ENCODE measurements at regions of chr1 and their contacts with region 1.

Region 1: DNA sequence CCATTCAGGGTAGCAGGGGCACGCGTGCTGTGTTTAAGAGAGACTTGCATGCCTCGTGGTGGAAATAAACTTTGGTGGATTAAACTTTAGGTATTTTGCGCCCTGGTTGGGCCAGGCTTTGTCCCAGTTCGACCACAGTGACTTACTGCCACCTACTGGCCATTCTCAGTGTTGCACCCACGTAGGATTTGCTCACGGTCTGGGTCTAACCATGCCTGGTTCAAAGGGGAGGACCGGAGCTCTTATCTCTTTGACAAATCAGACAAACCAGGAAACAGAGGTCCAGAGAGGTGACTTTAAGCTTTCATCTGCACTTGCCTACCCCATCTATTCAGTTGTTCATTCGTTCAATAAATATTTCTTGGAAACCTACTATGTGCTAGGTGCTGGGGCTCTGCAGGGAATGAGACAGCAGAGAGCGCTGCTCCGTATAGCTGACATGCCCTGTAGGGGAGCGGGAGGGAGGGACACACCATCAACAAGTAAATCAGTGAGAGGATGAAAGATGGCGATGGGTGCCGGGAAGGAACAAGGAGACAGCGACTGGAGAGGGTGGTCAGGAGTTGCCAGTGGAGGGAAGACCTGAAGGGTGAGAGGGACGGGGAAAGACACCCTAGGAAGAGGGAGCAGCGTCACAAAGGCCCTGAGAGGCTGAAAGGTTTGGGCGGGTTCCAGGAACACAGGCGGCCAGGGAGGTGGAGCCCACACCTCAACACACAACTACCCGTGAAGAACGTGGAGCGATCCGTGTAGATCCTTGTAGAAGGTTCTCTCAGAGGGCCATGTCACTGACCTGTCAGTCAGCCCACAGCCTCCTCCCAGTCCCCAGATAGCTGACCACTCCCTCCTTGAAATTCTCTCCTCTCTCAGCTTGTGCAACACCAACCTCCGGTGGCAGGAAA is 27.2 kb upstream of the TINAGL1 start:
- DNase-seq: peak; percentile 74 to 99 (median 95)
- ATAC-seq: peak; percentile 94
- H3K4me3 ChIP-seq: no peak overlapping the region
- H3K4me1 ChIP-seq: peaks cover 6% of the 10 kb centered on the region
- CTCF ChIP-seq: peak; percentile 90

Region 2: DNA sequence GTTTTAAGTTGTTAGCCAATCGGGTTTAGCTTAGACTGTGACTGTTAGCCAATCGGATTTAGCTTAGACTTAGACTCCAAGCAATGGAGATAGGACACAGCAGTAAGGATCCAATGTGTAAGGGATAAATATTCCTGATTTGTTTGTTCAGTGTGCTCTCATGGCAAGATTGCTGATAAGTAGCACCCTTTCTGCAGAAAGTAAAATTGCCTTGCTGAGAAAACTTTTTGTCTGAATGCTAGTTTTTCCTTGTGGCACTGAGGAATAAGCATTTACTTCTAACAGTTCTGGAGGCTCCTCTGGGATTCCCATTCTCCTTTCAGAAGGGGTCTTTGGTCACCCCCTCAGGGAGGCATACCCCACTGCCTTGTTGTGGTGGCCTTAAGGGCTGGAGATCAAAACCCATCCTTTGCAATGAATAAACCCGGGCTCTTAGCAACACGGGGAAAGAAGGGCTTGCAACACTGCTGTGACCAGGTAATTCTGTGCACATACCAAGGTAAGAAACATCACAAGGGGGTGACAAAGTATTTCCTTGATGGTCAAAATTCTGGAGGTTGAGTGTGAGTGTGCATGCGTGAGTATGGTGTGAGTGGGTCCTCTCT is 90.8 kb before region 1 on chr1:
- intact Hi-C with region 1: loop called in 1 of 2 experiments (anchors 10 kb)
- DNase-seq: no peak
- ATAC-seq: no peak
- H3K4me3 ChIP-seq: no peak overlapping the region
- H3K4me1 ChIP-seq: no peaks in the 10 kb centered on the region
- CTCF ChIP-seq: no peak

Measured in mucosa of descending colon (tissue), 3 donors.